ENCODE measurements at regions of chr7 and their contacts with region 1.

Region 1: DNA sequence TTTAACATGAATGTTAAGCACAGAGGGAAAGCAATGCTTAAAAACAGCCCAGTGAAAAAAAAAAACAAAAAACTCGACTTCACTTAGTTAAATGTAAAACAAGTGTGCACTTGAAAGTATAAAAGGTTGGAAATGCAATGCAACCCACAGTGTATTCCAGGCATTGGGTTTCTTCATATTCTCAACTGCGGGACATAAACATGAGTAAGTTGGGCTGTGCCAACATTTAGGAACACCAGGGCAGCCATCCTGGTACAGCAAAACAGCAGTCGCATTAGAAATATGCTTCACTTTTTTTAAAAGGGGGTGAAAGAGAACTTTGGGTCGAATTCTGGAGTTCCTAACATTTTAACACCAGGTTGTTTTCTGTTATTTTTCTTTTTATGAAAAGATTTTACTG is 937 bp downstream of the STEAP1 start:
- DNase-seq: no peak
- H3K4me3 Mint-ChIP-seq: peak overlapping the region; percentile 93
- H3K27ac Mint-ChIP-seq: peak overlapping the region; percentile 81
- H3K4me1 Mint-ChIP-seq: peaks cover 14% of the 10 kb centered on the region
- H3K27me3 Mint-ChIP-seq: no peaks in the 10 kb centered on the region
- CTCF ChIP-seq: no peak

Region 2: GRCh38 chr7:90165724-90166123 is 10.5 kb after region 1 on chr7:
- CTCF ChIA-PET with region 1: no interaction called
- intact Hi-C with region 1: no loop called
- DNase-seq: no peak
- H3K4me3 Mint-ChIP-seq: no peak overlapping the region
- H3K27ac Mint-ChIP-seq: no peak overlapping the region
- H3K4me1 Mint-ChIP-seq: peaks cover 19% of the 10 kb centered on the region
- H3K27me3 Mint-ChIP-seq: no peaks in the 10 kb centered on the region
- CTCF ChIP-seq: no peak

Region 3: DNA sequence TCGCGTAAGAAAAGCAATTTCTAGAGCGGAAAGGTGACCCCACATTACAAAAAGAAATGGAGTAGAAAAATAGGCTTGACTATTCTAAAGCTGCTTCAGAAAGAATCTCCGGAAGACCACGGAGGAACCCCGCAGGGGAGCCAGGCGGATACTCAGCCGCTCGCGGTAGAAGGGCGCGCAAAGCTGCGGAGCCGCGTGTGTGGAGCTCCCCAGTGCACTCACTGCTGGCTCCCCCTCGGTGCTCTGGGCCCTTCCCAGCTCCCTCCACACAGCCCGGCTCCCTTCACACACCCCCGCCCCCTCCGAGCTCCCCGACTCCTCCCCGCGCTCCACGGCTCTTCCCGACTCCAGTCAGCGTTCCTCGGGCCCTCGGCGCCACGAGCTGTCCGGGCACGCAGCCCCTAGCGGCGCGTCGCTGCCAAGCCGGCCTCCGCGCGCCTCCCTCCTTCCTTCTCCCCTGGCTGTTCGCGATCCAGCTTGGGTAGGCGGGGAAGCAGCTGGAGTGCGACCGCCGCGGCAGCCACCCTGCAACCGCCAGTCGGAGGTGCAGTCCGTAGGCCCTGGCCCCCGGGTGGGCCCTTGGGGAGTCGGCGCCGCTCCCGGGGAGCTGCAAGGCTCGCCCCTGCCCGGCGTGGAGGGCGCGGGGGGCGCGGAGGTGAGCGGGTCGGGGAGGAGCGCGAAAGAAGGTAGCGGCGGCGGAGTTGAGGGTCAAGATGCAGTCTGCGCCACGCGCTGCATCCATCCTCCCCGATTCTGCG is 56.4 kb after region 1 on chr7 and contains the start of gene STEAP2:
- CTCF ChIA-PET with region 1: interaction called, 17 read pairs
- intact Hi-C with region 1: loop called (anchors 2 kb)
- DNase-seq: peak; percentile 90
- H3K4me3 Mint-ChIP-seq: no peak within 1 kb of the TSS
- H3K27ac Mint-ChIP-seq: peak within 1 kb of the TSS; percentile 94
- H3K4me1 Mint-ChIP-seq: peaks cover 8% of the 10 kb centered on the region
- H3K27me3 Mint-ChIP-seq: no peaks in the 10 kb centered on the region
- CTCF ChIP-seq: peak; percentile 54
- total RNA-seq, gene STEAP2: 38.5 and 38.7 TPM in 2 replicates

Region 4: GRCh38 chr7:90229682-90230081 is 74.5 kb after region 1 on chr7:
- CTCF ChIA-PET with region 1: no interaction called
- intact Hi-C with region 1: loop called (anchors 5 kb)
- DNase-seq: no peak
- H3K4me3 Mint-ChIP-seq: peak overlapping the region; percentile 66
- H3K27ac Mint-ChIP-seq: peak overlapping the region; percentile 96
- H3K4me1 Mint-ChIP-seq: peaks cover 26% of the 10 kb centered on the region
- H3K27me3 Mint-ChIP-seq: no peaks in the 10 kb centered on the region
- CTCF ChIP-seq: no peak

Region 5: DNA sequence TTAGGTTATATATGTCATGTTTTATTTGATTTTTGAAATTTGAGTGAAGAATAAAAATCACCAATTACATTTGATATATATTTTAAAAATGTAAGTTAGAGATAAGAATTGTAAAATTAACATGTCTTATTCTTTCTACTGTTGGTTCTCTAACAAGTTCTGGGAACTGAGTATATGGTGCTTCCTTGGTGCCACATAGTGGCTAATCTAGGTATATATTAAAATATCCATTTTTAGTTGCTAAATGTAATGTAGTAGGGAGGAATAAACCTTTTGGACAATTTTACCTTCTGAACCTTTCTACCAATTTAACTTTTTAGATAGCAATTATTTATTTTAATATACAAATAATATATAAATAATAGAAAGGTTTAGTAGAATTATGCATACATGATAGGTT is 107.2 kb after region 1 on chr7:
- CTCF ChIA-PET with region 1: no interaction called
- intact Hi-C with region 1: loop called (anchors 1 kb)
- DNase-seq: no peak
- H3K4me3 Mint-ChIP-seq: no peak overlapping the region
- H3K27ac Mint-ChIP-seq: no peak overlapping the region
- H3K4me1 Mint-ChIP-seq: no peaks in the 10 kb centered on the region
- H3K27me3 Mint-ChIP-seq: no peaks in the 10 kb centered on the region
- CTCF ChIP-seq: no peak

Region 6: GRCh38 chr7:90337106-90337505 is 181.9 kb after region 1 on chr7:
- CTCF ChIA-PET with region 1: no interaction called
- intact Hi-C with region 1: no loop called
- DNase-seq: no peak
- H3K4me3 Mint-ChIP-seq: no peak overlapping the region
- H3K27ac Mint-ChIP-seq: no peak overlapping the region
- H3K4me1 Mint-ChIP-seq: no peaks in the 10 kb centered on the region
- H3K27me3 Mint-ChIP-seq: no peaks in the 10 kb centered on the region
- CTCF ChIP-seq: no peak

Region 7: GRCh38 chr7:90412458-90413184 is 257.4 kb after region 1 on chr7:
- CTCF ChIA-PET with region 1: no interaction called
- intact Hi-C with region 1: loop called (anchors 5 kb)
- DNase-seq: peak; percentile 66
- H3K4me3 Mint-ChIP-seq: no peak overlapping the region
- H3K27ac Mint-ChIP-seq: no peak overlapping the region
- H3K4me1 Mint-ChIP-seq: peaks cover 19% of the 10 kb centered on the region
- H3K27me3 Mint-ChIP-seq: no peaks in the 10 kb centered on the region
- CTCF ChIP-seq: no peak

Region 8: DNA sequence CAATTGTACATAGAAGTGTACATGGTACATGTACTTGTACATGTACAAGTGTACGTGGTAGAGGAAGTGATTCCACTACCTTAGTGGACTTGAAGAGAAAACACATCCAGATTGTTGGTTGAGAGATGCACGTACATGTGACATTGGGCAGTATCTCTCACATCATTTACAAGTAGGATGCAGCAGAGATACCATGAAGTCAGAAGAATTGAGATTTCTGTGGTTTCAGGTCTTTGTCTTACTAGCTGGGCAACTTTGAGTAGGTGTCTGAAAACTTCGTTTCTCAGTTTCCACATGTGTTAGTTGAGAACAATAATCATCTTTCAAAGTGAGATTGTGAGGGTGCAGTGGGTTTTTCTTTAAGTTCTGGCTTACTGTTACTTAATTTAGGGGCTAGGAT is 269.5 kb after region 1 on chr7:
- CTCF ChIA-PET with region 1: interaction called, 6 read pairs
- intact Hi-C with region 1: loop called (anchors 5 kb)
- DNase-seq: no peak
- H3K4me3 Mint-ChIP-seq: no peak overlapping the region
- H3K27ac Mint-ChIP-seq: no peak overlapping the region
- H3K4me1 Mint-ChIP-seq: peaks cover 16% of the 10 kb centered on the region
- H3K27me3 Mint-ChIP-seq: no peaks in the 10 kb centered on the region
- CTCF ChIP-seq: no peak